ENCODE measurements at regions of chr3 and their contacts with region 1.

Region 1: DNA sequence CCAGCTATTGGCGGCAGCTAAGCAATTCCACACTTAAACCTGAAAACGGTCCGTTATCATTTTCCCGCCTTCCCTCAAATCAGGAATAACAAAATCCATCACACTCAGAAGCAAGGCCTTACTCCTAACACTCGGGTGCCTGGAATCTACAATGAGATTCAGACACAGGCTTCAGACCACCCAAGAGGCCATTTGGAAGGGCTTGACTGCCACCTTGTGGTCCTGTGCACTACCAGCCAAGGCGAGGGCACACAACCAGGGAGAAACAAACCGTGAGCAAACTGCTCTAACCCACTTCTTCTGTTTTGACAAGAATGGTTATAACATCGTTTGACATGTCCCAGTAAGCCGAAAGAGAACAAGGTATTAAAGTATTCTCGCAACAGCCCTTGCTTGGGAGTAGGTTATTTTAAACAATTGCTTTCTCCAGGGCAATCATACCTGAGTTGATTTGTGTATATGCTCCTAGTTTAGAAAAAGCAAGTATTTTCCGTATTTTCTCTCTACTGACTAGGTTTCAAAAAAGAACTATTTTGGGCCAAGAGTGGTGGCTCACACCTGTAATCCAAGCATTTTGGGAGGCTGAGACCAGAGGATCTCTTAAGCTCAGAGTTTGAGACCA is 40.1 kb upstream of the TAFA4 start:
- DNase-seq: peak; percentile 51
- ATAC-seq: peak; percentile 97
- H3K4me3 ChIP-seq: no peak overlapping the region
- H3K27ac ChIP-seq: no peak overlapping the region
- H3K4me1 ChIP-seq: peaks cover 3% of the 10 kb centered on the region; the same call in 1 of the 2 replicates
- H3K27me3 ChIP-seq: peaks cover 16% of the 10 kb centered on the region
- CTCF ChIP-seq: peak; percentile 71
- POLR2A ChIP-seq: no peak
- RAD21 ChIP-seq: peak; percentile 76

Region 2: GRCh38 chr3:67357610-67358458 is 1614.6 kb before region 1 on chr3:
- CTCF ChIA-PET with region 1: no interaction called
- POLR2A ChIA-PET with region 1: no interaction called
- dilution Hi-C with region 1: no loop called
- in situ Hi-C with region 1: no loop called
- intact Hi-C with region 1: loop called (anchors 10 kb)
- DNase-seq: peak; percentile 35
- ATAC-seq: peak; percentile 79
- H3K4me3 ChIP-seq: no peak overlapping the region
- H3K27ac ChIP-seq: no peak overlapping the region
- H3K4me1 ChIP-seq: no peaks in the 10 kb centered on the region
- H3K27me3 ChIP-seq: no peaks in the 10 kb centered on the region
- CTCF ChIP-seq: peak; percentile 39
- POLR2A ChIP-seq: no peak
- RAD21 ChIP-seq: peak; percentile 30; the same call in 1 of the 2 replicates

Region 3: DNA sequence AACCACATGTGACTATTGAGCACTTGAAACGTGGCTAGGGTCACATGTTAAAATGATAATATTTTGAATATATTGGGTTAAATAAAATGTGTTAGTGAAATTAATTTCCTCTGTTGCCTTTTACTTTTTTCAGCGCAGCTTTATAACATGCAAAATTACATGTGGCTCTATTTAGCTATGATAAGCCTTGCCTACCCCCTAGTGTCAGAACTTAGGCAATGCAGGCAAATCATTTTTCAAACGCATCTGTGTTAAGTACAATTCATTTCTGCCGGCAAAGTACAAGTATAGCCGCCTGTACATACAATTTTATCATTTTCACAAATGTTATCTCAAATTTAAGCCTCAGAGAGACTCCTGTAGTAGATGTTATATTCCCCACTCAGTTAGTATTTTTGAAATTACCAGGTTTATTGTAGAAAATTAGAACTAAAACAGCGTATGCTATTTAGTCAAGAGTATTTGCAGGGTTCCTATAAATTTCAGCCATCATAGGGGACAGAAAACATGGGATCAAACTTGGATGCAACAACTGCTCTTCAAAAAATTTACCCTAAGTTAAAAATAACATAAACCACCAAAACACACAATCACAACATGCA is 96.3 kb before region 1 on chr3:
- CTCF ChIA-PET with region 1: no interaction called
- POLR2A ChIA-PET with region 1: no interaction called
- dilution Hi-C with region 1: no loop called
- in situ Hi-C with region 1: no loop called
- intact Hi-C with region 1: loop called (anchors 5 kb)
- DNase-seq: peak; percentile 74
- ATAC-seq: peak; percentile 96
- H3K4me3 ChIP-seq: no peak overlapping the region
- H3K27ac ChIP-seq: no peak overlapping the region
- H3K4me1 ChIP-seq: no peaks in the 10 kb centered on the region
- H3K27me3 ChIP-seq: peaks cover 3% of the 10 kb centered on the region; the same call in 1 of the 2 replicates
- CTCF ChIP-seq: peak; percentile 92
- POLR2A ChIP-seq: no peak
- RAD21 ChIP-seq: peak; percentile 86

Region 4: GRCh38 chr3:68893600-68894239 is 78.7 kb before region 1 on chr3:
- CTCF ChIA-PET with region 1: no interaction called
- POLR2A ChIA-PET with region 1: no interaction called
- dilution Hi-C with region 1: no loop called
- in situ Hi-C with region 1: no loop called
- intact Hi-C with region 1: loop called (anchors 2 kb)
- DNase-seq: peak; percentile 44
- ATAC-seq: peak; percentile 51; the same call in 1 of the 2 replicates
- H3K4me3 ChIP-seq: no peak overlapping the region
- H3K27ac ChIP-seq: no peak overlapping the region
- H3K4me1 ChIP-seq: no peaks in the 10 kb centered on the region
- H3K27me3 ChIP-seq: 0 out of 2 replicates have a peak, but pooled peaks cover 1% of the 10 kb centered on the region
- CTCF ChIP-seq: peak; percentile 45
- POLR2A ChIP-seq: no peak
- RAD21 ChIP-seq: peak; percentile 41

Region 5: DNA sequence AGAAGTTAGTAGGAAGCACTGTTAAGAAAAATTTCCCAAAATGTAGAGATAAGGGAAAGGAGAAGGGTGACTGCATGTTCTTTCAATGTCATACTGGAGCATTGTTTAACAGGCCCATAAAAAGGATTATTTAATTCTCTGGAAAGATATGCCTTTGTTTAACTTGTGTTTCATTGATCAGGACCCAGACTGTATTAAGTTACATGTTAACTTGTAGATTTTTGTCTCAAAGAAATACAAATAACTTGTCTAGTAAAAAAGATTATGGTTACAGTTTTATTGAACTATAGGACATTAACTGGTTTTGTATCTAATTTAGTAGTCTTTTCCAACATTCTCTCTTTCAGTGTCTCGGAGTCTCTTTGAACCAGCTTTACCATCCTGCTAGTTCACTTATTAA is 199.6 kb after region 1 on chr3:
- CTCF ChIA-PET with region 1: no interaction called
- POLR2A ChIA-PET with region 1: no interaction called
- dilution Hi-C with region 1: no loop called
- in situ Hi-C with region 1: no loop called
- intact Hi-C with region 1: no loop called
- DNase-seq: no peak
- ATAC-seq: no peak
- H3K4me3 ChIP-seq: no peak overlapping the region
- H3K27ac ChIP-seq: no peak overlapping the region
- H3K4me1 ChIP-seq: no peaks in the 10 kb centered on the region
- H3K27me3 ChIP-seq: peaks cover 6% of the 10 kb centered on the region
- CTCF ChIP-seq: no peak
- POLR2A ChIP-seq: no peak
- RAD21 ChIP-seq: no peak